Activated CD8-positive, alpha-beta T cell treated with anti-CD3 and anti-CD28 coated beads, Interleukin-2, amount 10 ng/mL, durations not matched to agents 7 days and 5 days (primary cell): ENCODE measurements at regions of chr1 and their contacts with region 1.

Region 1: DNA sequence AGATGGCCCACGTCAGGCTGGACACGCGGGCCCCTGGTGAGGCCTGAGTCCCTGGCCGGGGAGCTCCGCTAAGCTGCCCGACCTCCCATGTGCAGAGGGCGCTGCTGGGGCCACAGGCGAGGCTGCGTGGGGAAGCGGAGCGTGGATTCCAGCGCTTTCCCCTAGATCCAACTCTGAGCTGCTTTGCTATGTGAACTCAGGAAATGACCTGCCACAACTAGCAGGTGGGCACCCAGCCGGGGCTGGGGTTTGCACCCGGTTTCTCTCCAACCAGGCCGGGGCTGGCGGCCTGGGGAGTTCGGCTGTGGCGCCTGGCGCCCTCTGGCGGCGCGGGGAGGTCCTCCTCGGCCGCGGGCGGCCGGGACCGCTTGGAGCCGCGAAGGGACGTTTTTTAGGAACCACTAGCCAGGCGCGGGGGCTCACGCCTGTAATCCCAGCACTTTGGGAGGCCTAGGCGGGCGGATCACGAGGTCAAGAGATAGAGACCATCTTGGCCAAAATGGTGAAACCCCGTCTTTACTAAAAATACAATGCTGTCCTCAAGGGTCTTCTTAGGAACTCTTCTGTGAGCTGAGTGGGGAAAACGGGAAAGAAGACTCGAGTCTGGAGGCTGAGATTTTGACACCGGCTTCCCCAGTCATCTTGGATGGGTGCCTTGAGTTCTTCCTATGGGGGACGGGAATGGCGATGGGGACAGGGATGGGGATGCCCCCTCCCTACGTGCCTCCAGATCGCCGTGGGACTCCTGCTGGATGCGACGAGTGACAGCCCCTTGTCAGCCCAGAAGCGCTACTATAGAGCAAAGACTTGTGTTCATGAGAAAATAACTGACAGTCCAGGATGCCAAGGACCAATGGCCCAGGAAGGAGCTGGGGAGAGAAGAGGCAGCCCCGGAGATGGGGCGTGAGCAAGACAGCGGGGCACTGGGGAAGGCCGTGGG is 12.6 kb downstream of the PYCR2 start:
- DNase-seq: peak; percentile 74
- ATAC-seq: peak; percentile 89
- H3K4me3 Mint-ChIP-seq: no peak overlapping the region
- H3K27ac Mint-ChIP-seq: no peak overlapping the region
- H3K4me1 Mint-ChIP-seq: peaks cover 19% of the 10 kb centered on the region
- H3K27me3 Mint-ChIP-seq: no peaks in the 10 kb centered on the region

Region 2: GRCh38 chr1:225881969-225882693 is 29.3 kb before region 1 on chr1 and contains the start of gene TMEM63A:
- CTCF ChIA-PET with region 1: interaction called, 63 read pairs
- POLR2A ChIA-PET with region 1: no interaction called
- DNase-seq: peak; percentile 93
- ATAC-seq: peak; percentile 83
- H3K4me3 Mint-ChIP-seq: peak within 1 kb of the TSS; percentile 87
- H3K27ac Mint-ChIP-seq: peak within 1 kb of the TSS; percentile 92
- H3K4me1 Mint-ChIP-seq: peaks cover 56% of the 10 kb centered on the region
- H3K27me3 Mint-ChIP-seq: peaks cover 8% of the 10 kb centered on the region
- total RNA-seq, gene TMEM63A: 83.5 to 85.8 TPM

Region 3: DNA sequence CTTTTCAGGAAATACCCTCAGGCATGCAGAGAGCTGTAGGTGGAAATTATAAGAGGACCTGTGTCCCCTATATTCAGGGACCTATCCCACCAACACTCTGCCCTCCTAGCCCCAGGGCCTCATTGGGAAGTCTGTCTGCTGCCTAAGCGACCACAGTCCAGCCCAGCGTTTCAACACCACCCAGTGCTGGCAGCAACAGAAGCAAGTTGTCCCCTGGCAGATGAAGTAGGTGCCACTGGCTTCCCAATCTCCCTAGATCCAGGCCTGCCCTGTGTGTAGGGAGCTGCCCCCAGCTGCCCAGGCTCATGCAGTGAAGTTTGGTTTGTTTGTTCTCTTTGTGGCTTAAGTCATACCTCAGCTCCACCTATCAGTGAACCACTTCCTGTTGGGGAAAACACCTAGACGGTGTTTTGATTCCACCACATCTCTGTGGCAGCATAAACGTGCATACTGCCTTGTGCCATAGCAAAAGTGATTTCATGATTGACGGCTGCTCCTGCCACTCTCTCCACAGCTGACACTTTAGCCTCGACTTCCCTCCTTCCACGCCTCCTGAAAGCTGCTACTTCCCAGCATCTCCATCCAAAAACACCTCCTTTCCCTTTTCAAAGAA is 14.4 kb before region 1 on chr1:
- CTCF ChIA-PET with region 1: interaction called, 27 read pairs
- POLR2A ChIA-PET with region 1: interaction called, 3 read pairs
- DNase-seq: peak; percentile 89
- ATAC-seq: peak; percentile 98
- H3K4me3 Mint-ChIP-seq: peak overlapping the region; percentile 56
- H3K27ac Mint-ChIP-seq: peak overlapping the region; percentile 80
- H3K4me1 Mint-ChIP-seq: peaks cover 42% of the 10 kb centered on the region
- H3K27me3 Mint-ChIP-seq: peaks cover 12% of the 10 kb centered on the region

Region 4: GRCh38 chr1:225923692-225924555 is 12.5 kb after region 1 on chr1 and contains the start of gene PYCR2:
- CTCF ChIA-PET with region 1: interaction called, 11 read pairs
- POLR2A ChIA-PET with region 1: interaction called, 5 read pairs
- DNase-seq: peak; percentile 96
- ATAC-seq: peak; percentile 98
- H3K4me3 Mint-ChIP-seq: peak within 1 kb of the TSS; percentile 97
- H3K27ac Mint-ChIP-seq: peak within 1 kb of the TSS; percentile 97
- H3K4me1 Mint-ChIP-seq: peaks cover 65% of the 10 kb centered on the region
- H3K27me3 Mint-ChIP-seq: no peaks in the 10 kb centered on the region
- total RNA-seq, gene PYCR2: 122 to 126 TPM